ENCODE measurements at regions of chr14 and their contacts with region 1.

Region 1: DNA sequence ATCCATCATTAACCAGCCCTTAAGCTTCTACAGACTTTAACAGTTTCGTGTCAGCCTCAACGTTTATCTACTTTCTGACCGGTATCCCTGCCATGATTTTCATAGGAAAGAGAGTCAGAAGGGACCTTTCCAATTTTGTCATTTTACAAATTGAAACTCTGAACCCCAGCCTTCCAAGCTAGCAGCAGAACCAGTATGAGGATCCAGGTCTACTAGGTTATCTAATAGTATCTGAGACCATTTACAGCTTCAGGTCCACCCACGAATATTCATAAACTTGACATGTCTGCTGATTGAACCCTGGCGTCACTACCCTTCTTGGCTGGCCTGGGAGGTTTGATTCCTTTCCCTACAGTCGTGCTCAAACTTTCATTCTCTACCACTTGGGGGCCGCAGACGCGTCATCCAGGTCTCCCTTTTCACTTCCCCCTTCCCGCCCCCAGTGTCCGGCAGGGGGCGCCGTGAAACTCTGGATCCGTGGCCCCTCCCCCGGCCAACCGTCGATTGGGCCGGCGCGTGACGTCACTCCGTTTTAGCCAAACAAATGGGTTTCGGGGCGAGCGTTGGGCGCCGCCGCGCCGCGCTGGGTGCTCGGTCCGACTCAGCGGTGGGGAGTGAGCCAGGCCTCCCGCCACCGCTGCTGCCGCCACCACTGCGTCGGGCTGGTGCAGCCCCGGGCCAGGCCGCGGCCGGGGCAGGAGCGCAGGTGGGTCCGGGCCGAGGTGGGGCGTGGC is at the start of gene FBXO34:
- DNase-seq: peak; percentile 98
- H3K4me3 ChIP-seq: peak within 1 kb of the TSS; percentile 85 to 99 (median 98)
- H3K27ac ChIP-seq: peak within 1 kb of the TSS; percentile 88
- H3K4me1 ChIP-seq: peaks cover 25% of the 10 kb centered on the region
- H3K27me3 ChIP-seq: no peaks in the 10 kb centered on the region
- CTCF ChIP-seq: peak; percentile 98 to 100
- POLR2A ChIP-seq: peak; percentile 71
- total RNA-seq, gene FBXO34: 14.2 and 16.5 TPM in 2 replicates

Region 2: DNA sequence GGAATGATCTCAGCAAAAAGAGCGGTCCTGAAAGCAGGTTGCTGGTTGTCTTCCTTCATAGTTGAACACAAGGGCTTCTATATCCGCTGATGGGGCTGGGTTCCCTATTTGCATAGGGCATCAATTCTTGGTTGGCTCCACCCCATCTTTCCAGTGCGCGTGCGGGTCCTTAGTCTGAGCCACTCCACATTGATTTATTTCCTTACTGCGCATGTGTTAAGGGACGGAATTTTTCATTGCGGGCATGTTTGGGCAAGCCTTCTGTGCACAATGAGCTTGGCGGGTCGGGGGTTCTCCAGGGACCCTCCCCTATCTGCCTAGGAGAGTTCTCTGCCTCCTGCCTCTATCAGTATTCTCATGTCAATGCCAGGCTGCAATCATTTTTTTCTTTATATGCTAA is 58.4 kb before region 1 on chr14:
- CTCF ChIA-PET with region 1: interaction called, 7 read pairs
- POLR2A ChIA-PET with region 1: no interaction called
- dilution Hi-C with region 1: no loop called
- intact Hi-C with region 1: loop called (anchors 5 kb)
- DNase-seq: no peak
- H3K4me3 ChIP-seq: no peak overlapping the region
- H3K27ac ChIP-seq: no peak overlapping the region
- H3K4me1 ChIP-seq: no peaks in the 10 kb centered on the region
- H3K27me3 ChIP-seq: no peaks in the 10 kb centered on the region
- CTCF ChIP-seq: no peak
- POLR2A ChIP-seq: no peak

Region 3: GRCh38 chr14:55297611-55298441 is 26.8 kb after region 1 on chr14:
- CTCF ChIA-PET with region 1: interaction called, 3 read pairs
- POLR2A ChIA-PET with region 1: no interaction called
- dilution Hi-C with region 1: no loop called
- intact Hi-C with region 1: loop called (anchors 1 kb)
- DNase-seq: peak; percentile 60
- H3K4me3 ChIP-seq: peak overlapping the region in 2 of 3 experiments; percentile 19 to 23
- H3K27ac ChIP-seq: no peak overlapping the region
- H3K4me1 ChIP-seq: peaks cover 5% of the 10 kb centered on the region
- H3K27me3 ChIP-seq: no peaks in the 10 kb centered on the region
- CTCF ChIP-seq: peak in 1 of 2 donors; percentile 1
- POLR2A ChIP-seq: no peak

Region 4: GRCh38 chr14:55411426-55412389 is 140.7 kb after region 1 on chr14 and contains the start of gene ATG14:
- CTCF ChIA-PET with region 1: no interaction called
- POLR2A ChIA-PET with region 1: no interaction called
- dilution Hi-C with region 1: no loop called
- intact Hi-C with region 1: loop called (anchors 5 kb)
- DNase-seq: peak; percentile 90
- H3K4me3 ChIP-seq: peak within 1 kb of the TSS; percentile 77 to 91 (median 85)
- H3K27ac ChIP-seq: peak within 1 kb of the TSS; percentile 60
- H3K4me1 ChIP-seq: peaks cover 15% of the 10 kb centered on the region
- H3K27me3 ChIP-seq: peaks cover 0 to 3% of the 10 kb centered on the region in 2 experiments
- CTCF ChIP-seq: no peak
- POLR2A ChIP-seq: no peak
- total RNA-seq, gene ATG14: 9.6 and 10.0 TPM in 2 replicates

Region 5: GRCh38 chr14:55579724-55580469 is 308.9 kb after region 1 on chr14 and contains the start of gene KTN1:
- CTCF ChIA-PET with region 1: no interaction called
- POLR2A ChIA-PET with region 1: no interaction called
- dilution Hi-C with region 1: no loop called
- intact Hi-C with region 1: loop called (anchors 2 kb)
- DNase-seq: peak; percentile 76
- H3K4me3 ChIP-seq: peak within 1 kb of the TSS; percentile 62 to 87 (median 73)
- H3K27ac ChIP-seq: peak within 1 kb of the TSS; percentile 70
- H3K4me1 ChIP-seq: peaks cover 8% of the 10 kb centered on the region
- H3K27me3 ChIP-seq: no peaks in the 10 kb centered on the region
- CTCF ChIP-seq: no peak
- POLR2A ChIP-seq: peak; percentile 67
- total RNA-seq, gene KTN1: 135 and 148 TPM in 2 replicates

Measured in endothelial cell of umbilical vein (primary cell).